K562 (cell line): ENCODE measurements at regions of chr4 and their contacts with region 1.

Region 1: DNA sequence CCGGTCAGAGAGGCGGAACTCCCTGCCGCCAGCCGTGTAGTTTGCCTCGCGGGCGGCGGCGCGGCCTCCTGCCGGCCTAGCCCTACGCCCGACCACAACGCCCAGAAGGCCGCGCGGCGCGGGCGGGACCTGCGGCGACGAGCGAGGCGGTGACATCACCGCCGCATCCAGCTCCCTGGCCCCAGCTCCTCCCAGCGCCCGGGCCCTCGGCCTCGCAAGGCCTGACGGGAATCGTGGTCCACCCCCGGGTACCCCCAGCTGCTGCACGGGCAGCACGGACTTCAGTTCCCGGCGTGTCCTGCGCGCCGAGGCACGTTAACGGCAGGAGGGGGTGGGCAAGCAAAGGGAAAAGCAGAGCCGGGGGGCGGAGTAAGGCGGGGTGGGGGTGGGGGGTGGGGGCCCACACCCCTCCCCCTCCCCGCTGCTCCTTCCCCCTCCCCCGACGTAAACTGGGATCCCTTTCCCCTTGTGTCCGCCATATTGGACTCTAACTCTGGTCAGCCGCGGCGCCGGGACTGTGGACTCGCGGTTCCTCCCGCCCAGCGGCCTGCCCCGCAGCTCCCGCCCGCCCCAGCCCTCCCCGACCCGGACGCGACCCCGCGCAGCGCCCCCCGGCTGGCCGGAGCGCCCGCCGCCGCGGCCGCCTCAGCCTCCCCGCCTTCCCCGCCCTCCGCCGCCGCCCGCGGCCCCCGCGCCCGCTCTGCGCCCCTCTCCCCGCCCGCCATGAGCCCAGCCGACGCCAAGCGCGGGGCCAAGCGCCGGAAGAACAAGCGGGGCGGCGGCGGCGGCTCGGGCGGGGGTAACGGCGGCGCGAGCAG is at the start of gene FAM193A:
- DNase-seq: peak; percentile 89 to 99 (median 94)
- ATAC-seq: peak; percentile 96
- H3K4me3 ChIP-seq: peak within 1 kb of the TSS; percentile 99
- H3K27ac ChIP-seq: peak within 1 kb of the TSS; percentile 97
- H3K4me1 ChIP-seq: peaks cover 12 to 25% of the 10 kb centered on the region in 2 experiments; a peak in 4 of 5 replicates
- H3K27me3 ChIP-seq: no peaks in the 10 kb centered on the region
- CTCF ChIP-seq: no peak; a peak in 1 of 6 replicates
- EP300 ChIP-seq: no peak
- POLR2A ChIP-seq: no peak
- RAD21 ChIP-seq: no peak
- polyA plus RNA-seq, gene FAM193A: 0.46 to 0.55 TPM

Region 2: DNA sequence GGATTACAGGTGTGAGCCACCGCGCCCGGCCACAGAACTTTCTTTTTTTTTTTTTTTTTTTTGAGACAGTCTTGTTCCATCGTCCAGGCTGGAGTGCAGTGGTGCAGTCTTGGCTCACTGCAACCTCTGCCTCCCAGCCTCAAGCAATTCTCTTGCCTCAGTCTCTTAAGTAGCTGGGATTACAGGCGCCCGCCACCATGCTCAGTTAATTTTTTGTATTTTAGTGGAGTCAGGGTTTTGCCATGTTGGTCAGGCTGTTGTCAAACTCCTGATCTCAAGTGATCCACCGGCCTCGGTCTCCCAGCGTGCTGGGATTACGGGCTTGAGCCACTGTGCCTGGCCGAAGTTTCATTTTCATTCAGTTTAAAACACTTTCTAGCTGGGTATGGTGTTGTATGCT is 16.4 kb after region 1 on chr4:
- CTCF ChIA-PET with region 1: no interaction called
- POLR2A ChIA-PET with region 1: interaction called, 11 read pairs
- in situ Hi-C with region 1: no loop called
- intact Hi-C with region 1: no loop called
- DNase-seq: no peak
- ATAC-seq: no peak
- H3K4me3 ChIP-seq: no peak overlapping the region
- H3K27ac ChIP-seq: no peak overlapping the region
- H3K4me1 ChIP-seq: no peaks in the 10 kb centered on the region; a peak in 2 of 5 replicates
- H3K27me3 ChIP-seq: no peaks in the 10 kb centered on the region
- CTCF ChIP-seq: no peak
- EP300 ChIP-seq: no peak
- POLR2A ChIP-seq: no peak
- RAD21 ChIP-seq: no peak

Region 3: DNA sequence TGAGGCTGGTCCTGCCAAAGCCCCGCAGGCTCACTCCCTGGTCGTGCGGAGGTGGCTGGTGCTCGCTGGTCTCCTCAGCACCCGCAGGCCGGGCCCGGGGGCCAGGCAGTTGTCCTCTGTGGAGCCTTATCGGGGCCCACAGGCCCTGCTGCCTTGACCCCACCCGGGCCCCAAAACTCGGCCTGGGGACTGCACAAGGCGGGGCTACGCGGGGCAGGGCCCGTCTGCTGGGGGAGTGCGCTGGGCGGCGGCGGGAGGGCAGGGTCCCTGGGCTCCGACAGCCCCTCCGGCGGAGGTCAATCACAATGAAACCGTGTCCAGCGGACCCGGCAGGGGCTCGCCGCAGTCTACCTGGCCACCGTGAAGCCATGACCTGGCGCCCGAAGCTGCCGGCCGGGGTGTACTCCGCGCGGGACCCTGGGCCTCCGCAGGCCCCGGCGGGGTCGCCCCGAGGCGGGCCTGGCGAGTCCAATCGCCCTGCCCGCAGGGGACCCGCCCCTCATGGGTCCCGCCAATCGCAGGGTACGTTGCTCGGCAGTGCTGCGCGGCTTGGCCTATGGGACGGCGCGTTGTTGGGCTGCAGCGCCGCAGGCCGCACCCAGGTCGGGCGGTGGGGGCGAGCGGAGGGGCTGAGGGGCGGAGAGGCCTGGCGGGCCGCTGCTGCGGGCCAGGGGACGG is 307.0 kb after region 1 on chr4 and contains the start of gene ADD1:
- CTCF ChIA-PET with region 1: no interaction called
- POLR2A ChIA-PET with region 1: no interaction called
- in situ Hi-C with region 1: no loop called
- intact Hi-C with region 1: no loop called
- DNase-seq: peak; percentile 94 to 100 (median 100)
- ATAC-seq: peak; percentile 93
- H3K4me3 ChIP-seq: peak within 1 kb of the TSS; percentile 82
- H3K27ac ChIP-seq: peak within 1 kb of the TSS; percentile 83
- H3K4me1 ChIP-seq: peaks cover 19 to 34% of the 10 kb centered on the region in 2 experiments
- H3K27me3 ChIP-seq: no peaks in the 10 kb centered on the region
- CTCF ChIP-seq: no peak
- EP300 ChIP-seq: peak; percentile 15; the same call in 1 of the 2 replicates
- POLR2A ChIP-seq: peak; percentile 87
- RAD21 ChIP-seq: no peak
- polyA plus RNA-seq, gene ADD1: 17.5 to 20.7 TPM